A673 (cell line): ENCODE measurements at regions of chr14 and their contacts with region 1.

Region 1: GRCh38 chr14:21014761-21015190 is 10.1 kb downstream of the NDRG2 start:
- DNase-seq: peak; percentile 93
- H3K4me3 ChIP-seq: peak overlapping the region; percentile 8
- H3K27ac ChIP-seq: no peak overlapping the region
- H3K4me1 ChIP-seq: no peaks in the 10 kb centered on the region
- H3K27me3 ChIP-seq: no peaks in the 10 kb centered on the region
- CTCF ChIP-seq: peak; percentile 92

Region 2: DNA sequence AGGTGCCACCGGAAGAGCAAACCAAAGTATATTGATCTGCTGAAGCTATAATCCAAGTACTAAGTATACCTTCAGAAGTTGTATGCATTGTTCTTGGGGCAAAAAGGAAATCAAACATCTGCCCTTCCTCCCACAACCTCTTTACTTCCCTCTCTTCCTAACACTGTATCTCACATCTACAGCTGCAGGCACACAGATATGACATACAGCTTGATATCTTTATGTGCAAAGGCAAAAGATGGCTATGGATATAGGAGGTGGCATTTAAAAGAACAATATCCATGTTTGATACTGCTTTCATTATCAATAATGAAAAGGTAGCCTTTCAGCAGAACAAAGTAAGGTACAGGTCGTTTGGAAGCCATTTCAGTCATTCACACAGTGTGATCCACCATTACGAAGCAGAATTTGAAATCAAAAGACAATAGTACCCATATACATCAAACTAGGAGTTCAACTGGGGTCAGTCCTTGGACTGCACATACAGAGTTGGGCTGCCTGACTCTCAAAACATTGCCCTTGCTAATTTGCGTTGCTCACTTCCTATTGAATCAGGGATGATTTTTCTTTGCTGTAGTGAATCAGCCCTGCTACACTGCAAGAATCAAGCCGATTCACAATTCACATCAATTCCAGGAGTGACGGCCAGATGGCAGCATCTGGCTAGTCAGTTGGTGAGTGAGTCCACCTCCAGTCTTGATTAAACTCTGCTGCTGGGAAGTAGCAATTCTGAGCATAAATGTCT is 317.3 kb before region 1 on chr14:
- CTCF ChIA-PET with region 1: no interaction called
- POLR2A ChIA-PET with region 1: no interaction called
- intact Hi-C with region 1: no loop called
- DNase-seq: peak; percentile 77
- H3K4me3 ChIP-seq: no peak overlapping the region
- H3K27ac ChIP-seq: no peak overlapping the region
- H3K4me1 ChIP-seq: no peaks in the 10 kb centered on the region
- H3K27me3 ChIP-seq: no peaks in the 10 kb centered on the region
- CTCF ChIP-seq: peak; percentile 77

Region 3: GRCh38 chr14:20743256-20743959 is 271.4 kb before region 1 on chr14:
- CTCF ChIA-PET with region 1: no interaction called
- POLR2A ChIA-PET with region 1: no interaction called
- intact Hi-C with region 1: no loop called
- DNase-seq: no peak
- H3K4me3 ChIP-seq: no peak overlapping the region
- H3K27ac ChIP-seq: no peak overlapping the region
- H3K4me1 ChIP-seq: no peaks in the 10 kb centered on the region
- H3K27me3 ChIP-seq: no peaks in the 10 kb centered on the region
- CTCF ChIP-seq: no peak

Region 4: GRCh38 chr14:20877016-20877415 is 137.8 kb before region 1 on chr14:
- CTCF ChIA-PET with region 1: no interaction called
- POLR2A ChIA-PET with region 1: no interaction called
- intact Hi-C with region 1: no loop called
- DNase-seq: no peak
- H3K4me3 ChIP-seq: no peak overlapping the region
- H3K27ac ChIP-seq: no peak overlapping the region
- H3K4me1 ChIP-seq: peaks cover 4% of the 10 kb centered on the region
- H3K27me3 ChIP-seq: peaks cover 22% of the 10 kb centered on the region
- CTCF ChIP-seq: no peak

Region 5: DNA sequence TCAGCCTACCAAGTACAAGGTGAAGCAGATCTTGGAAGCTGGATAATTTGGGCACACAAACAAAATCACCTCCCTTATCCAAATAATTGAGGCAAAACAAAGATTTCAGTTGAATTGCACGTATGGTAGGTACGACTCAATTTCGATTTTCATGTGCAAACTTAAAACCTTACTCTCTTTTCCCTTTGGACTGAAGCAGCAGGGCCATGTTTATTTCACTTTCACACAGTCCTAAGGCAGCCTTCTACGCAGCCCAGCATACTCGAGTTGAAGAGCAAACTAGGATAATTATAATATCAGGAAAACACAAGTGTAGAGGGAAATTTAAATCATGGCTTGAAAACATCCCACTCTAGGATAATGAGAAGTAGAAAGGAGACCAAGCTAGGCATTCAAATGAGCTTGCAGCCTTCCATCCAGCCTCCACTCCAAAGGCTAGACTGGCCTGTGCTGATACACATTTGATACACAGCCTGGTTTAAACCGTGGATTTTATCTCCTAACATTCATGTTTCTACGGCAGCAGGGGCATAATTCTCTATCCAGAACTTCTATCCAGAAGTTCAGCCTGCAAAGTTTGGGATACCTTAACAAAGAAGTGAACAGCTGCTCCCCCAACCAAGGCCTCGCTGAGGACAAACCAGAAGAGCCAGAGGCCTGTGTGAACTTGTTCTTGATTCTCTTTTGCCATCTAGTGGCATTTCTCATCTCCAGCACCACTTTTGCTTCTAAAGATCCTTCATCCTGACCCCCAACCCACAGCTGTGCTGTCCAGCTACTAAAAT is 25.0 kb after region 1 on chr14:
- CTCF ChIA-PET with region 1: interaction called, 44 read pairs
- POLR2A ChIA-PET with region 1: no interaction called
- intact Hi-C with region 1: loop called (anchors 1 kb)
- DNase-seq: peak; percentile 68
- H3K4me3 ChIP-seq: no peak overlapping the region
- H3K27ac ChIP-seq: no peak overlapping the region
- H3K4me1 ChIP-seq: no peaks in the 10 kb centered on the region
- H3K27me3 ChIP-seq: no peaks in the 10 kb centered on the region
- CTCF ChIP-seq: peak; percentile 66

Region 6: GRCh38 chr14:21071225-21072030 is 56.7 kb after region 1 on chr14:
- CTCF ChIA-PET with region 1: interaction called, 29 read pairs
- POLR2A ChIA-PET with region 1: no interaction called
- intact Hi-C with region 1: no loop called
- DNase-seq: peak; percentile 98
- H3K4me3 ChIP-seq: peak overlapping the region; percentile 98
- H3K27ac ChIP-seq: peak overlapping the region; percentile 90
- H3K4me1 ChIP-seq: peaks cover 27% of the 10 kb centered on the region
- H3K27me3 ChIP-seq: no peaks in the 10 kb centered on the region
- CTCF ChIP-seq: no peak

Region 7: GRCh38 chr14:21092273-21093011 is 77.7 kb after region 1 on chr14:
- CTCF ChIA-PET with region 1: interaction called, 31 read pairs
- POLR2A ChIA-PET with region 1: interaction called, 3 read pairs
- intact Hi-C with region 1: loop called (anchors 1 kb)
- DNase-seq: peak; percentile 74
- H3K4me3 ChIP-seq: no peak overlapping the region
- H3K27ac ChIP-seq: peak overlapping the region; percentile 60
- H3K4me1 ChIP-seq: peaks cover 46% of the 10 kb centered on the region
- H3K27me3 ChIP-seq: no peaks in the 10 kb centered on the region
- CTCF ChIP-seq: peak; percentile 100

Region 8: GRCh38 chr14:21103710-21104447 is 89.1 kb after region 1 on chr14:
- CTCF ChIA-PET with region 1: interaction called, 55 read pairs
- POLR2A ChIA-PET with region 1: no interaction called
- intact Hi-C with region 1: loop called (anchors 1 kb)
- DNase-seq: peak; percentile 99
- H3K4me3 ChIP-seq: peak overlapping the region; percentile 92
- H3K27ac ChIP-seq: peak overlapping the region; percentile 100
- H3K4me1 ChIP-seq: peaks cover 30% of the 10 kb centered on the region
- H3K27me3 ChIP-seq: no peaks in the 10 kb centered on the region
- CTCF ChIP-seq: peak; percentile 84

Region 9: GRCh38 chr14:21136024-21136423 is 121.2 kb after region 1 on chr14:
- CTCF ChIA-PET with region 1: interaction called, 10 read pairs
- POLR2A ChIA-PET with region 1: no interaction called
- intact Hi-C with region 1: no loop called
- DNase-seq: peak; percentile 62
- H3K4me3 ChIP-seq: no peak overlapping the region
- H3K27ac ChIP-seq: no peak overlapping the region
- H3K4me1 ChIP-seq: no peaks in the 10 kb centered on the region
- H3K27me3 ChIP-seq: no peaks in the 10 kb centered on the region
- CTCF ChIP-seq: peak; percentile 83

Region 10: GRCh38 chr14:21191809-21192446 is 177.2 kb after region 1 on chr14:
- CTCF ChIA-PET with region 1: no interaction called
- POLR2A ChIA-PET with region 1: no interaction called
- intact Hi-C with region 1: loop called (anchors 10 kb)
- DNase-seq: peak; percentile 78
- H3K4me3 ChIP-seq: peak overlapping the region; percentile 47
- H3K27ac ChIP-seq: no peak overlapping the region
- H3K4me1 ChIP-seq: peaks cover 10% of the 10 kb centered on the region
- H3K27me3 ChIP-seq: no peaks in the 10 kb centered on the region
- CTCF ChIP-seq: no peak

Region 11: DNA sequence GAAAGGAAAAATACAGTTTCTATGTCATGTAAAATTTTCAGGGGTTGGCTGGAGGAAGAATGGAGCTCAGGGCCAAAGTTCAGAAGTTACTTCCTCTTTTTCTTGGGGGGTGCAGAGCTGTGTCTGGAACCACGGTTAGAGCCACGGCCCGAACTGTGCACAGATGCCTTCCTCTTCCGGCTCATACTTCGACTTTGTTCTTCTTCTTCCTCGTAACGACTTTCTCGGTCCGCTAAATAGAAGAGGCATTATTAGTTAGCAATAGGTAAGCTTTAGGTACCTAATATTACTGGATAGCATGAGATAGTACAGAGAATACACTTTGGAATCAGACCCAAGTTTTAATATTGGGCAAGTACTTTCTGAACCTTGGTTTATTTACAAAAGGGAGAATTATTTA is 337.8 kb after region 1 on chr14:
- CTCF ChIA-PET with region 1: no interaction called
- POLR2A ChIA-PET with region 1: no interaction called
- intact Hi-C with region 1: no loop called
- DNase-seq: no peak
- H3K4me3 ChIP-seq: no peak overlapping the region
- H3K27ac ChIP-seq: no peak overlapping the region
- H3K4me1 ChIP-seq: peaks cover 7% of the 10 kb centered on the region
- H3K27me3 ChIP-seq: no peaks in the 10 kb centered on the region
- CTCF ChIP-seq: no peak